Activated naive CD8-positive, alpha-beta T cell treated with anti-CD3 and anti-CD28 coated beads, Interleukin-2, amount 10 ng/mL, durations not matched to agents 7 days and 5 days (primary cell): ENCODE measurements at regions of chr1 and their contacts with region 1.

Region 1: GRCh38 chr1:149886396-149887195 is 12.8 kb upstream of the BOLA1 start:
- DNase-seq: peak; percentile 88
- ATAC-seq: peak; percentile 59
- H3K4me3 Mint-ChIP-seq: no peak overlapping the region
- H3K27ac Mint-ChIP-seq: no peak overlapping the region
- H3K4me1 Mint-ChIP-seq: peaks cover 16% of the 10 kb centered on the region
- H3K27me3 Mint-ChIP-seq: no peaks in the 10 kb centered on the region

Region 2: GRCh38 chr1:149899460-149900293 is 13.1 kb after region 1 on chr1 and contains the start of gene BOLA1:
- POLR2A ChIA-PET with region 1: interaction called, 54 read pairs
- DNase-seq: peak; percentile 81
- ATAC-seq: peak; percentile 94
- H3K4me3 Mint-ChIP-seq: peak within 1 kb of the TSS; percentile 89
- H3K27ac Mint-ChIP-seq: peak within 1 kb of the TSS; percentile 92
- H3K4me1 Mint-ChIP-seq: peaks cover 20% of the 10 kb centered on the region
- H3K27me3 Mint-ChIP-seq: no peaks in the 10 kb centered on the region
- total RNA-seq, gene BOLA1: 23.7 to 25.4 TPM

Region 3: DNA sequence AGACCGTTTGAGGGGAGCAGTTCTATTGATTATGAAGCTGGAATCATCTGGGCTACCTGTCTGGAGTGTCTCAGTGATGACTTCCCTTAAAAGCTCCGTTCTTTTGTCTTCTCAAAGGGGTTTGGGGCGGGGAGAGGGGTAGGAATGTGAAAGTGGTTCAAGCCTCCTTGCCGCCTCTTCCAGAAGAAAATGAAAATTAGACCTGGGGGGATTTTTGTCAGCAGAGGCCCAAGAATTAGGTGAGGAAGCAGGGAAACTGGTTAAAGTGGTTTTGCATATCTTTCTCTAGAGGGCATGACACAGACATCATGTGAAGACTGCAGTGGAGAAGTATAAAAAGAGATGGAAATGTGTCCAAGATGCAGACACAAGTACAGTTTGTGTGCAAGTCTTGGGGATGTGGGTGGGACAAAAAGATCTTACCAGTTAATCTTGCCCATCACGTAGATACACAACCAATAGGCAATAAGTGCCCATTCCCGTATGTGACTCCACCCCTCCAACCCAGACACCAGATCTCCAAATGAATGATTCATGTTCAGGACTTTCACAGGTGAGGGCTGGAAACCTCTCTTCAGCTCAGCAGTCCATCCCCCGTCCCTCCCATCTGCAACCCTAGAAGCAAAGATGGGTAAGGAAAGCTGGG is 50.6 kb after region 1 on chr1:
- POLR2A ChIA-PET with region 1: interaction called, 46 read pairs
- DNase-seq: no peak
- ATAC-seq: no peak
- H3K4me3 Mint-ChIP-seq: peak overlapping the region; percentile 44
- H3K27ac Mint-ChIP-seq: peak overlapping the region; percentile 66
- H3K4me1 Mint-ChIP-seq: peaks cover 22% of the 10 kb centered on the region
- H3K27me3 Mint-ChIP-seq: no peaks in the 10 kb centered on the region

Region 4: DNA sequence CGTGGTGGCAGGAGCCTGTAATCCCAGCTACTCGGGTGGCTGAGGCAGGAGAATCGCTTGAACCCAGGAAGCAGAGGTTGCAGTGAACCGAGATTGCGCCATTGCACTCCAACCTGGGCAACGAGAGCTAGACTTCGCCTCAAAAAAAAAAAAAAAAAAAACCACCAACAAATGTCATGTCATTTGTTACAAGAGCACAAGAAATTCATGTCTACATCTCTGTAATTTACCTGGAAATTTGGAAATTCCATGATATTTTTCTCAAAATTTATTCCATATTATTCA is 164.4 kb after region 1 on chr1:
- POLR2A ChIA-PET with region 1: interaction called, 27 read pairs
- DNase-seq: no peak
- ATAC-seq: no peak
- H3K4me3 Mint-ChIP-seq: no peak overlapping the region
- H3K27ac Mint-ChIP-seq: no peak overlapping the region
- H3K4me1 Mint-ChIP-seq: peaks cover 10% of the 10 kb centered on the region
- H3K27me3 Mint-ChIP-seq: peaks cover 9% of the 10 kb centered on the region

Region 5: DNA sequence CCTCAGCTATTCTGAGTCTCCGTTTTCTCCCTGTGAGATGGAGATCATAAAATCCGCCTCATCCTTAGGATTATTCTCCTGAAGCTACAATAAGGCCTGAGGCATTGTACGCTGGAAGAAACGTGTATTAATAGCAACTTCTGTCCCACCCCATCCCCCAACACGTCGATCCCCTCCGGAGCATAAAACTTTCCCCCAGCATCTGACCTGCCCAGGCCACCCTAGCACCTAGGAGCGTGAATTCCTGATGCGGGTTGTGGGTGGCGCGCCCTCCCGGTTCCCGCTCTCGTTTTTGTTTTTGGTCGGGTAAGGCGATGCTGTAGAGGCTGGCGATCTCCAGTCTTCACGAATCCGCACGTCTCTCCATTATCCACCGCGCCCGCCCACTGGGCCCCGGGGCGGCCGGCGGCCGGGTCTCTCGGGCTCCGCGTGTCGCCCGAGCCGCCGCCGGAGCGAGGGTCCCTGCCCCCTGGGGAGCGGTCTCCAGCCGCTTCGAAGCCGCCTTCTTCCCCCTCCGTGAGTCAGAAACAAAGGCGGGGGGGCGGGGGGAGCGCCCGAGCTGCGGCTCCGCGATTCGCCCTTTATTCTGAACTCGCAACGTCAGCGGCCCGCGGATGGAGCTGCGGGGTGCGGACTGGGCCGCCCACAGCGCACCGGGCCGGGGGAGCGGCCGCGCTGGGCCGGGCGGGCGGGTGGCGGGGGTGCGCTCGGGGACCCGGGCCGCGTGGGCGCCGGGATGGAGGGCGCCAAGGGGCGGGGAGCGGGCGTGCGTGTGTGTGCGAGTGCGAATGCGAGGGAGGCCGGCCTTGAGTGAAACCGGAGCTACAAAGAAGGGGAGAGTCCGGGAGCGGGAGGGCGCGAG is 262.9 kb after region 1 on chr1 and contains the start of gene PLEKHO1:
- POLR2A ChIA-PET with region 1: interaction called, 25 read pairs
- DNase-seq: peak; percentile 78
- ATAC-seq: peak; percentile 66
- H3K4me3 Mint-ChIP-seq: peak within 1 kb of the TSS; percentile 95
- H3K27ac Mint-ChIP-seq: peak within 1 kb of the TSS; percentile 96
- H3K4me1 Mint-ChIP-seq: peaks cover 68% of the 10 kb centered on the region
- H3K27me3 Mint-ChIP-seq: peaks cover 4% of the 10 kb centered on the region
- total RNA-seq, gene PLEKHO1: 140 to 143 TPM

Region 6: DNA sequence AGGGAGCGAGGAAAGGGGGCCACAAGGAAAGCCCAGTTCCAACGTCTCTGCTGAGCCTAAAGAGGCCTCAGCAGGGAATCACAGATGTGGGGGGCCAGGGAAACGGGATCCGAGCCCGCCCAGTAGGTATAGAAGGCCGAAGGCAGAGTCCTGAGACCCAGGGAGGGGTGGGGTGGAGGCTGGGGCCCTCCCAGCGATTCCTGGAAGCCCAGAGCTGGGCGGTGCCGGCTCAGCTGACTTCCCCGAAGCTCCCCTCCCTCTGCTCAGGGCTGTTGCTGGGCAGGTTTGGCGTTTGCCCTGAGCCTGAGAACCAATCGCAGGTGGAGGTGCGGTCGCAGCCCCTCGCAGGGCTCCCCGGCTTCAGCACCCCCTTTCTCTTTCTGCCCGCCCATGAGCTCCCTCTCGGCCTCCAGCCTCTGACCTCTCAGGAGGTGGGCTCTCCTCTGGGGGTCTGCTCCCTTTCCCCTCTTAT is 675.4 kb after region 1 on chr1:
- POLR2A ChIA-PET with region 1: interaction called, 17 read pairs
- DNase-seq: peak; percentile 87
- ATAC-seq: peak; percentile 61
- H3K4me3 Mint-ChIP-seq: peak overlapping the region; percentile 97
- H3K27ac Mint-ChIP-seq: peak overlapping the region; percentile 100
- H3K4me1 Mint-ChIP-seq: peaks cover 43% of the 10 kb centered on the region
- H3K27me3 Mint-ChIP-seq: no peaks in the 10 kb centered on the region